Activated naive CD8-positive, alpha-beta T cell treated with anti-CD3 and anti-CD28 coated beads, Interleukin-2, amount 10 ng/mL, durations not matched to agents 7 days and 5 days (primary cell): ENCODE measurements at regions of chr15 and their contacts with region 1.

Region 1: GRCh38 chr15:66497502-66498455 is at the start of gene SNAPC5:
- DNase-seq: peak; percentile 99
- ATAC-seq: peak; percentile 94
- H3K4me3 Mint-ChIP-seq: peak within 1 kb of the TSS; percentile 95
- H3K27ac Mint-ChIP-seq: peak within 1 kb of the TSS; percentile 94
- H3K4me1 Mint-ChIP-seq: peaks cover 38% of the 10 kb centered on the region
- H3K27me3 Mint-ChIP-seq: no peaks in the 10 kb centered on the region
- total RNA-seq, gene SNAPC5: 32.4 to 33.7 TPM

Region 2: GRCh38 chr15:66293419-66294156 is 204.2 kb before region 1 on chr15 and contains the start of gene DIS3L:
- POLR2A ChIA-PET with region 1: interaction called, 11 read pairs
- DNase-seq: peak; percentile 79
- ATAC-seq: peak; percentile 77
- H3K4me3 Mint-ChIP-seq: peak within 1 kb of the TSS; percentile 78
- H3K27ac Mint-ChIP-seq: peak within 1 kb of the TSS; percentile 85
- H3K4me1 Mint-ChIP-seq: peaks cover 32% of the 10 kb centered on the region
- H3K27me3 Mint-ChIP-seq: no peaks in the 10 kb centered on the region
- total RNA-seq, gene DIS3L: 27.2 to 27.8 TPM

Region 3: GRCh38 chr15:66356345-66357236 is 141.2 kb before region 1 on chr15 and contains the start of gene TIPIN:
- POLR2A ChIA-PET with region 1: interaction called, 24 read pairs
- DNase-seq: peak; percentile 98
- ATAC-seq: peak; percentile 95
- H3K4me3 Mint-ChIP-seq: peak within 1 kb of the TSS; percentile 100
- H3K27ac Mint-ChIP-seq: peak within 1 kb of the TSS; percentile 100
- H3K4me1 Mint-ChIP-seq: peaks cover 21% of the 10 kb centered on the region
- H3K27me3 Mint-ChIP-seq: no peaks in the 10 kb centered on the region
- total RNA-seq, gene TIPIN: 29.5 to 31.3 TPM

Region 4: DNA sequence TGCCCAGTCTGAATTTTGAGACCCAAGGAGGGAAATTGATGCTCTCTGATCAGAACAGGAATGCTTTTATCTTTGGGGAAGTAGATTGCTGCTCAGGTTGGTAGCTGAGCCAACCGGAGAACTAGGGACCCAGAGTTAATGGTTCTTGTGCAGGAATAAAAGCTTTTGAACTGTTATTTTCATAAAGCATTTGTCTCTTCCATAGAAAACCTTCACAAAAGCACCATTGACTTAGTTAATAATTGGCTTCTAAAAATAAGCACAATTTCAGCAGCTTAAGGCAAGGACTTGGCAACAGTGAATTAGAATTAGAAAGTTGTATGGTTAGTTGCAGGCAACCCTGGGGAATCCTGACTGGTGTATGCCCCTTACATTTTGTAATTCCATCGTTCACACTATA is 57.3 kb before region 1 on chr15:
- POLR2A ChIA-PET with region 1: no interaction called
- DNase-seq: no peak
- ATAC-seq: no peak
- H3K4me3 Mint-ChIP-seq: no peak overlapping the region
- H3K27ac Mint-ChIP-seq: no peak overlapping the region
- H3K4me1 Mint-ChIP-seq: no peaks in the 10 kb centered on the region
- H3K27me3 Mint-ChIP-seq: no peaks in the 10 kb centered on the region